GM12878 (cell line): ENCODE measurements at regions of chr12 and their contacts with region 1.

Region 1: DNA sequence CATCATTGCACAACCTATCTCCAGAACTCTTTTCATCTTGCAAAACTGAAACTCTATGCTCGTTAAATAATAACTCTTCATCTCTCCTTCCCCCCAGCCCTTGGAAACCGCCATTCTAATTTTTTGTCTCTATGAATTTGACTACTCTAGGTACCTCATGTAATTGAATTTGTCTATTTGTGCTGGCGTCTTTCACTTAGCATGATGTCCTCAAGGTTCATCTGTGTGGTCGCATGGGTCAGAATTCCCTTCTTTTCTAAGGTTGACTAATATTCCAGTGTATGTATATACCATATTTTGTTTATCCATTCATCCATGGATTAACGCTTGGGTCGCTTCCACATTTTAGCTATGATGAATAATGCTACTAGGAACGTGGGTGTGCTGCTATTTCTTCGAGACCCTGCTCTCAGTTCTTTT is 80.1 kb downstream of the PLXNC1 start:
- DNase-seq: no peak
- ATAC-seq: peak; percentile 83
- H3K4me3 ChIP-seq: no peak overlapping the region
- H3K27ac ChIP-seq: 0 out of 2 replicates have a peak overlapping the region, but pooled peaks have one; percentile 13
- H3K4me1 ChIP-seq: peaks cover 39% of the 10 kb centered on the region
- H3K27me3 ChIP-seq: no peaks in the 10 kb centered on the region
- CTCF ChIP-seq: no peak
- EP300 ChIP-seq: peak in 1 of 2 experiments; percentile 39; a peak in 1 of 4 replicates
- POLR2A ChIP-seq: no peak
- RAD21 ChIP-seq: no peak

Region 2: DNA sequence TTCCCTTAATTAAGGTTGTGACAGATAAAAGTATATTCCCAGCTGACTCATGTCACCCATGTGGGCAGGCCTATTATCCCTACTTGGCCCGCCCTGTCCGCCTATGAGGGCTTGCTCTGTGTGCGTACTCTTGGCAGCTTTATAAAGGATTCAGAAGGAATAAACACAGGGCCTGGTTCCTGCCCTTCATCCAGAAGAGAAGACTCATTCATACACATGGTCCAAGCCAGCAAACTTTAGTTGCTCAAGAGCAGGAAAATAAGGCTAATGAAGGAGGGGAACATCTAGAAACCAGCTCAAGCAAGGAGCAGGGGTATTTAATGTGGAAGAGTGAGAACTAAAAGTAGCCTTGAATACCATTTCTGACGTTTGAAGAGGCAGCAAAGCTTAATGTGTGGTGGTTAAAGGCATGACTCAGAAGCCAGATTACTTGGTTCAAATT is 409.4 kb before region 1 on chr12:
- CTCF ChIA-PET with region 1: no interaction called
- POLR2A ChIA-PET with region 1: no interaction called
- RAD21 ChIA-PET with region 1: no interaction called
- SMC1A ChIA-PET with region 1: no interaction called
- in situ Hi-C with region 1: no loop called
- intact Hi-C with region 1: no loop called
- DNase-seq: no peak
- ATAC-seq: no peak
- H3K4me3 ChIP-seq: no peak overlapping the region
- H3K27ac ChIP-seq: no peak overlapping the region
- H3K4me1 ChIP-seq: no peaks in the 10 kb centered on the region
- H3K27me3 ChIP-seq: no peaks in the 10 kb centered on the region
- CTCF ChIP-seq: no peak
- EP300 ChIP-seq: no peak
- POLR2A ChIP-seq: no peak
- RAD21 ChIP-seq: no peak

Region 3: DNA sequence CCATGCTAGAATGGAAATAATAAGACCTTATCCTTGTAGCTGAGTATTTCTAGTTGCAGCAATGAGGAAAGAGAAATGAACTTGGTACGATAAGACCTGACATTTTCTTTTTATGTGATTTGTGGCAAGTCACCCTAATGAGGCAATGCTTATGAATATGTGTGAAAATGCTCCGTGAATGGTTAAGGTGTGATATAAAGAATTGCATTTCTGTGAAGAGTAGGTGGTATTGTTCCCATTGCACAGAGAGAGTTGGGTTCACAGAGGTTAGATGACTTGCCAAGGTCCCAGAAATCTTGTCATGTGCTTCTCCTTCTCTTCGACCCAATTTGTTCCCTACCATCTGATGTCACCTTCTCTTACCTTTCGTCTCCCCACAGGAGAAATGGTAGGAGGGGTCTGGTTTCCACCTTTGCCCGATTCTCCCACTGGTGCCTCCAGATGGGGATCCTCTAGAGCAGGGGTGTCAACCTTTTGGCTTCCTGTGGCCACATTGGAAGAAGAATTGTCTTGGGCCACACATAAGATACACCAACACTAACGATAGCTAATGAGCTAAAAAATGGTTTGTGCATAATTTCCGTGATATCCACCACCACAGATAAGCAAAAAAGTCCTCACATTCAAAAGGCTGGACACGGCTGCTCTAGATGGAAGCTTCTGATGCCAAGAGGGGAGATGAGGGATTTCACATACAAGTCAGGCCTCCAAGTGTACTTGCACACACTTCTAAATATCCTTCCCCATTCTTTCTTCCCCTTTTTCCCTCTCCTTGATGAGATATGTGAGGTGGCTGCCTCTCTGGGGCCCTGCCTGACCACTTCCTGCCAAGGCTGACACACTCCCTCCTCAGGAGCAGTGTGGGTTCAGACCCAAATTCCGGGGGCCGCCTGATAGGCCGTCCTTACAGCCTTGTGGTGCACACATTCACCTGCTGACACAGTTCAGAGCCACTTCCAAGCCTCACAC is 16.0 kb after region 1 on chr12:
- CTCF ChIA-PET with region 1: no interaction called
- POLR2A ChIA-PET with region 1: interaction called, 6 read pairs
- RAD21 ChIA-PET with region 1: interaction called, 5 read pairs
- SMC1A ChIA-PET with region 1: interaction called, 13 read pairs
- in situ Hi-C with region 1: no loop called
- intact Hi-C with region 1: no loop called
- DNase-seq: no peak
- ATAC-seq: peak; percentile 86
- H3K4me3 ChIP-seq: no peak overlapping the region
- H3K27ac ChIP-seq: peak overlapping the region; percentile 41
- H3K4me1 ChIP-seq: peaks cover 37% of the 10 kb centered on the region
- H3K27me3 ChIP-seq: no peaks in the 10 kb centered on the region
- CTCF ChIP-seq: no peak
- EP300 ChIP-seq: peak in 1 of 2 experiments; percentile 63; a peak in 1 of 4 replicates
- POLR2A ChIP-seq: no peak; the same call in 1 of the 2 replicates
- RAD21 ChIP-seq: no peak

Region 4: GRCh38 chr12:94305130-94305957 is 76.8 kb after region 1 on chr12:
- CTCF ChIA-PET with region 1: no interaction called
- POLR2A ChIA-PET with region 1: no interaction called
- RAD21 ChIA-PET with region 1: no interaction called
- SMC1A ChIA-PET with region 1: interaction called, 3 read pairs
- in situ Hi-C with region 1: no loop called
- intact Hi-C with region 1: loop called (anchors 2 kb)
- DNase-seq: peak; percentile 67
- ATAC-seq: peak; percentile 71
- H3K4me3 ChIP-seq: no peak overlapping the region
- H3K27ac ChIP-seq: peak overlapping the region; percentile 42
- H3K4me1 ChIP-seq: peaks cover 35% of the 10 kb centered on the region
- H3K27me3 ChIP-seq: no peaks in the 10 kb centered on the region
- CTCF ChIP-seq: no peak
- EP300 ChIP-seq: peak; percentile 73 to 76; a peak in 3 of 4 replicates
- POLR2A ChIP-seq: no peak
- RAD21 ChIP-seq: no peak

Region 5: GRCh38 chr12:94320109-94320508 is 91.6 kb after region 1 on chr12:
- CTCF ChIA-PET with region 1: no interaction called
- POLR2A ChIA-PET with region 1: no interaction called
- RAD21 ChIA-PET with region 1: no interaction called
- SMC1A ChIA-PET with region 1: no interaction called
- in situ Hi-C with region 1: no loop called
- intact Hi-C with region 1: no loop called
- DNase-seq: no peak
- ATAC-seq: no peak
- H3K4me3 ChIP-seq: no peak overlapping the region
- H3K27ac ChIP-seq: no peak overlapping the region
- H3K4me1 ChIP-seq: peaks cover 9% of the 10 kb centered on the region; the same call in 1 of the 2 replicates
- H3K27me3 ChIP-seq: no peaks in the 10 kb centered on the region
- CTCF ChIP-seq: no peak
- EP300 ChIP-seq: no peak
- POLR2A ChIP-seq: no peak
- RAD21 ChIP-seq: no peak

Region 6: DNA sequence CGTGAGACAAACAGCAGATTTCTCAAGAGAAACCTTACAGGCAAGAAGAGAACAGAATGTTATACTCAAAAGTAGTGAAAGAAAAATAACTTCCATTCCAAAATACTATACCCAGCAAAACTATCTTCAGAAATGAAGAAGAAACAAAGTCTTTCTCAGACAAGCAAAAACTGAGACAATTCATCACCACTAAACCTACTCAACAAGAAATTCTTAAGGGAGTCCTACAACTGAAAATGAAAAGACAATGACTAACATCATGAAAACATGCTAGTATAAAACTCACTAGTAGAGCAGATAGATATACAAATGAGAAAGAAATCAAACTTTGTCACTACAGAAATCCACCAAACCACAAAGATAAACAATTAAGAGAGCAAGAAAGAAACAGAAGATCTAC is 124.6 kb after region 1 on chr12:
- CTCF ChIA-PET with region 1: no interaction called
- POLR2A ChIA-PET with region 1: no interaction called
- RAD21 ChIA-PET with region 1: no interaction called
- SMC1A ChIA-PET with region 1: no interaction called
- in situ Hi-C with region 1: no loop called
- intact Hi-C with region 1: no loop called
- DNase-seq: no peak
- ATAC-seq: no peak
- H3K4me3 ChIP-seq: no peak overlapping the region
- H3K27ac ChIP-seq: no peak overlapping the region
- H3K4me1 ChIP-seq: no peaks in the 10 kb centered on the region
- H3K27me3 ChIP-seq: no peaks in the 10 kb centered on the region
- CTCF ChIP-seq: no peak
- EP300 ChIP-seq: no peak
- POLR2A ChIP-seq: no peak
- RAD21 ChIP-seq: no peak

Region 7: DNA sequence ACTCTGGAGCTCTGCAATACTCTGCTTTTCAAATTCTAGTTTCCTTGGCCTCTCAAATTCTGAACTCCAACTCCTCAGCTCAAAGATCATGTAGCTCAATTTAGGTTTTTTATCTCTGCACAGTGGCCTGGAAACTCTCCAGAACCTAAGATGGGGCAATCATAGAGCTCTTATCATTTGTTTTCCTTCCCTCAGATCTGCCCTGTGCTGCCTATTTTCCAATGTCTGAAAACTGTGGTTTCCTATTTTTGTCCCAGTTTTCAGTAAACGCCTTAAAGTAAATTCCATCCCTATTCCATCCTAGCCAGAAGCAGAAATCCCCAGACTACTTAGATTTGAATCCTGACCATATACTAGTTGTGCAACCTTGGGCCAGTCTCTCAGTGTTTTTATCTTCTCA is 157.9 kb after region 1 on chr12:
- CTCF ChIA-PET with region 1: no interaction called
- POLR2A ChIA-PET with region 1: no interaction called
- RAD21 ChIA-PET with region 1: no interaction called
- SMC1A ChIA-PET with region 1: no interaction called
- in situ Hi-C with region 1: no loop called
- intact Hi-C with region 1: no loop called
- DNase-seq: no peak
- ATAC-seq: no peak
- H3K4me3 ChIP-seq: no peak overlapping the region
- H3K27ac ChIP-seq: no peak overlapping the region
- H3K4me1 ChIP-seq: no peaks in the 10 kb centered on the region
- H3K27me3 ChIP-seq: no peaks in the 10 kb centered on the region
- CTCF ChIP-seq: no peak
- EP300 ChIP-seq: no peak
- POLR2A ChIP-seq: no peak
- RAD21 ChIP-seq: no peak